AG04449 (cell line): ENCODE measurements at regions of chr15 and their contacts with region 1.

Region 1: GRCh38 chr15:50675536-50676144 is 11.0 kb downstream of the TRPM7 start:
- DNase-seq: no peak
- H3K4me3 ChIP-seq: no peak overlapping the region
- CTCF ChIP-seq: no peak

Region 2: DNA sequence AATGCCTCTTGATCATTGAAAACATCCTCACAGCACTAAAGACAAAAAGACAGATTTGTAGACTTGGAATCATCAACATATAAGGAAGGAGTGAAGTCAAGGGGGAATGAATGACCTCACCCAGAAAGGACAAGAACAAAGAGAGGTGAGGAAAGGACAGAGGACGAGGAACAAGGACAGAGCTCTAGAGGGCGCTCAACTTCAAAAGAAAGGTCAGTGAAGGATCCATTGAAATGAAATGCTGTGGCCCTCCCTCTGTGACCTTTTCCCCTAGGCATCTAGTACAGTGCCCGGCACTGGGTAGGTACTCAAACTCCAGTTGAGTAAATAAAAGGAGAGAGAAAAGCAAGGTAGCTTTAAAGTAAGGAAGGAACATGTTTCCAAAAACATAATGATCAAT is 559.2 kb before region 1 on chr15:
- CTCF ChIA-PET with region 1: no interaction called
- POLR2A ChIA-PET with region 1: no interaction called
- DNase-seq: no peak
- H3K4me3 ChIP-seq: no peak overlapping the region
- CTCF ChIP-seq: peak; percentile 15

Region 3: DNA sequence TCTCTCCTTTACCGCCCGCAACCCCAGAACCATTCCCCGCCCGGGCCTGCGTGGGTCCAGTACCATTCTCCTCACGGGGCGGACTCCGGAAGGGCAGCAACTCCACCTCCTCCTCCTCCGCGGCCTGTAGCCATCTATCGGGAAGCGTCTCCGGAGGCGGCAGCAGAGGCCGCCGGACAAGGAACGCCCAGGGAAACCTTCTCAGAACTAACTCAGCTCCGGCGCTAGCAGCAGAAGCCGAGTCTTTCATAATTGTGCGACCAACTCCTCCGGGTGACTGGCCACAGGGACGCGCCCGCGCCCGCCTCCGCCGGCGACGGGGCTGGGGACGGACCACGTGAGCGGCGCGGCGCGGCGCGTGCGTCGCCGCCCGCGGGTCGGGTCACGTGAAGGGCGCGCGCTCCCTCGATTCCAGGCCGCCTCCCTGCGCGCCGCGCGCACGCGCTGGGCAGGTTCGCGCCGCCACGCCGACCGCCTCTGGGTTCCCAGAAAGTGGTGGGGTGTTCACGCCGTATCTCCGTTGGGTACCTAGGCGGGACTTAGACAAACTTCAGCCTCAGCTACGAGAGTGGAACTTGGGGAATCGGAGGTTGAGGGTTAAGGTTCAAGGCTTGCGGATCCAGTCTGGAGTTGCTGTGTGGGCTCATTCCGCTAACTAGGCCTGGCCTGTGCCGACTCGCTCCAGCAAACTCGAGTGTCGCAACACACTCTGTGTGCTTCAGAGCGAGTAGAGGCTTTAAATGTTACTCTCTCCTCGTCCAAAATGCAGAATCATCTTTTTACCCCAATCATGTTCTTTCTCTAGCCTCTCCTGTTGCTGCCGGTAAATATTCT is 11.0 kb after region 1 on chr15 and contains the start of gene TRPM7:
- CTCF ChIA-PET with region 1: interaction called, 16 read pairs
- POLR2A ChIA-PET with region 1: interaction called, 3 read pairs
- DNase-seq: no peak
- H3K4me3 ChIP-seq: peak within 1 kb of the TSS; percentile 94
- CTCF ChIP-seq: peak; percentile 15

Region 4: GRCh38 chr15:50840520-50840919 is 164.9 kb after region 1 on chr15:
- CTCF ChIA-PET with region 1: no interaction called
- POLR2A ChIA-PET with region 1: no interaction called
- DNase-seq: no peak
- H3K4me3 ChIP-seq: no peak overlapping the region
- CTCF ChIP-seq: no peak

Region 5: GRCh38 chr15:50876989-50877360 is 201.3 kb after region 1 on chr15:
- CTCF ChIA-PET with region 1: interaction called, 58 read pairs
- POLR2A ChIA-PET with region 1: no interaction called
- DNase-seq: peak; percentile 92
- H3K4me3 ChIP-seq: peak overlapping the region; percentile 31
- CTCF ChIP-seq: peak; percentile 83

Region 6: GRCh38 chr15:50883903-50884302 is 208.3 kb after region 1 on chr15:
- CTCF ChIA-PET with region 1: interaction called, 58 read pairs
- POLR2A ChIA-PET with region 1: interaction called, 3 read pairs
- DNase-seq: no peak
- H3K4me3 ChIP-seq: no peak overlapping the region
- CTCF ChIP-seq: no peak

Region 7: DNA sequence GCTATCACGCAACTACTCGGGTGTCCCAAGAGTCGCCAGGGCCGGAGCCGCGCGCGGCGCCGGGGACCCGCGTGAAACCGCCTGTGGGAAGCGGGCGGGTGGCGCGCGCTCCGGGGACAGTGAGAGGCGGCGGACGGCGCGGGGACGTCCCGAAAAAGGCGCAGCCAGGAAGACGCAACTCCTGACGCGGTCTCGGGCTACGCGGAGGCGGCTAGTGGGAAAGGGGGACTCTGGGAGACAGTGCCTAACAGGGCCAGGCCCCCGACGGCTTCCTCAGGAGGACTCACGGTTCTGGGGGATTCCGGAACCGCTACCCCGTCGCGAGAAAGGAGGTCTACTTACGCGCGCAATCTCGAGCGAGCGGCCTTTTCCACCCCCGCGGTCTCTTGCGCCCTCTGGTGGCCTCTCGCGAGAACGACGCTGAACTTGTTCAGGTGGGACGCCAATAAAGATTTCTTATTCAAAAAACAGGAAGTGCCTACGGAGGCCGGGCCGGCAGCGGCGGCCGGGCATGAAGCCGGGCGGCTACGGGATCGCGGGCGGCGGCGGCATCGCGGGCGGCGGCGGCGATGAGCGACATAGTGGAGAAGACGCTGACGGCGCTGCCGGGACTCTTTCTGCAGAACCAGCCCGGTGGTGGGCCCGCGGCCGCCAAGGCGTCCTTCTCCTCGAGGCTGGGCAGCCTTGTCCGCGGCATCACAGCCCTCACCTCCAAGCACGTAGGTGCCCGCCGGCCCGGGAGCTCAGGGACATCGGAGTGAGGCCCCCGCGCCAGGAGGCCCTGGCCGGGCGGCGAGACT is 232.8 kb after region 1 on chr15 and contains the start of gene AP4E1:
- CTCF ChIA-PET with region 1: interaction called, 32 read pairs
- POLR2A ChIA-PET with region 1: interaction called, 3 read pairs
- DNase-seq: peak; percentile 47
- H3K4me3 ChIP-seq: peak within 1 kb of the TSS; percentile 89
- CTCF ChIP-seq: peak; percentile 86

Region 8: DNA sequence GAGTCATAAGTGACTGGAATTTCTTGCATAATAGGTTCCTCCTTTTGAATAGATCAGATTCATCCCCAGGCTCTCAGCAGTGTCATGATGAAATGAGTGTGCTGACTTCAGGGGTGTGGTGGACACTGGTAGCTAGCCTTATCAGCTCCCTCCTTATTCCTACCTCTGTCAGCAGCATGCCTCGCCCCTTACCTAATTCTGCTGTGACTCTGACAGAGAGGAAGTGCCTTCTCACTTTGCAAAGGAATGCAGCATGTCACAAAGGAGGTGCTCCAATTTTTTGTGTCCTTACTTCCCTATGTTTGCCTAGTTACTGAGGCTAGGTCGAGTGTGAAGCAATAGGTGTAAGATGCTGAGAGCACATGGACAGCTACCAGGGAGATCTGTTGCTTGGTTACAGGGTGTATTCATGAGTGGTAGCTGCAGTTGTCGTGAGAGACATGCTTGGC is 328.5 kb after region 1 on chr15:
- CTCF ChIA-PET with region 1: no interaction called
- POLR2A ChIA-PET with region 1: no interaction called
- DNase-seq: peak; percentile 12
- H3K4me3 ChIP-seq: no peak overlapping the region
- CTCF ChIP-seq: no peak